ENCODE measurements at regions of chr2 and their contacts with region 1.

Region 1: DNA sequence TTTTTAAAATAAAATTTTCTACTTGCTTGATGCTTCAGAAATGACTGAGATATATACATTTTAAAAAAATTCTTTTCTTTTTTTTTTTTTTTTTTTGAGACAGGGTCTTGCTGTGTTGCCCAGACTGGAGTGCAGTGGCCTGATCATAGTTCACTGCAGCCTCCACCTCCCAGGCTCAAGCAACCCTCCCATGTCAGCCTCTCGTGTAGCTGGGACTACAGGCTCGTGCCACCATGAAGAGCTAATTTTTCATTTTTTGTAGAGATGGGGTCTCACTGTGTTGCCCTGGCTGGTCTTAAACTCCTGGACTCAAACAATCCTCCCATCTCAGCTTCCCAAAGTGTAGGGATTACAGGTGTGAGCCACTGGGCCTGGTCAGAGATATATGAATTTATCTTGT is 12.9 kb downstream of the CYS1 start:
- DNase-seq: no peak
- H3K4me3 ChIP-seq: no peak overlapping the region
- H3K27ac ChIP-seq: no peak overlapping the region
- H3K4me1 ChIP-seq: no peaks in the 10 kb centered on the region
- H3K27me3 ChIP-seq: no peaks in the 10 kb centered on the region
- CTCF ChIP-seq: no peak

Region 2: GRCh38 chr2:9778012-9778411 is 289.3 kb before region 1 on chr2:
- CTCF ChIA-PET with region 1: interaction called, 10 read pairs
- POLR2A ChIA-PET with region 1: no interaction called
- intact Hi-C with region 1: no loop called
- DNase-seq: no peak
- H3K4me3 ChIP-seq: no peak overlapping the region
- H3K27ac ChIP-seq: no peak overlapping the region
- H3K4me1 ChIP-seq: peaks cover 19% of the 10 kb centered on the region
- H3K27me3 ChIP-seq: no peaks in the 10 kb centered on the region
- CTCF ChIP-seq: peak; percentile 64

Region 3: DNA sequence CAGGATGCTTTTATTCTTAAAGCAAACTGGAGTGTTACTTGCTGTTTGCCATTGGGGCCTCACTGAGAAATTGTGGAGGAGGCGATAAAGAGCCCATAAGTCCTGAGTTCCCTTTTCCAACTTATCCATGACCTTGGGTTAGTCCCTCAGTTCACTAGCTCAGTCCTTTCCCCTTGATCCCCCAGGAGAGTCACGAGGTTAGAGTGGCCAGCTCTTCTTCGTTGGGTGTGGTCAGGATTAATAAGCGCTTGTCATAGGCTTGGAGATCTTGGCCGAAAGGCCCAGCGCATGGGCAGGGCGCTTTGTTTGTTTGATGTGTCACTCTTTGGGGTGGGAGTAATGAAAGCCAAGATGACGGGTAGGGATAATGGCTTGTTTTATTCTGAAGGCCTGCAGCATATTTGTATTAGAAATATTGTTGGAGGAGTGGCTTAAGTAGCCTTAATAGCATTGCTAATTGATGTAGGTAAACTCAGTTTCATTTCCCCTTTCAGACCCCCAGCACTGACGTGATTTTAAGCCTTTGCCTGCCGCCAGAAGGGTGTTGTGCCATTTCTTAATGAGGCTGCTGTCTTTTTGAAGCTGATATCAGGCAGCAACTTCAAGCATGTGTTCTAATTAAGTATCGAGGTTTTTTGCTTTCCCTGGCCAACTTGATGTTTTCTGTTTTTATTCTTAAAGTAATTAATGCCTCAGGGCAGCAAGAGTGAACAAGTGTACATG is 100.1 kb before region 1 on chr2:
- CTCF ChIA-PET with region 1: no interaction called
- POLR2A ChIA-PET with region 1: no interaction called
- intact Hi-C with region 1: no loop called
- DNase-seq: no peak
- H3K4me3 ChIP-seq: no peak overlapping the region
- H3K27ac ChIP-seq: no peak overlapping the region
- H3K4me1 ChIP-seq: peaks cover 28% of the 10 kb centered on the region
- H3K27me3 ChIP-seq: no peaks in the 10 kb centered on the region
- CTCF ChIP-seq: no peak

Region 4: GRCh38 chr2:11103984-11104793 is 1036.9 kb after region 1 on chr2:
- CTCF ChIA-PET with region 1: no interaction called
- POLR2A ChIA-PET with region 1: no interaction called
- intact Hi-C with region 1: no loop called
- DNase-seq: no peak
- H3K4me3 ChIP-seq: no peak overlapping the region
- H3K27ac ChIP-seq: no peak overlapping the region
- H3K4me1 ChIP-seq: peaks cover 8% of the 10 kb centered on the region
- H3K27me3 ChIP-seq: no peaks in the 10 kb centered on the region
- CTCF ChIP-seq: no peak

Measured in PC-9 (cell line).